ENCODE measurements at regions of chr18 and their contacts with region 1.

Region 1: GRCh38 chr18:48675352-48675761 is 136.5 kb downstream of the CTIF start:
- DNase-seq: peak; percentile 84 to 91
- ATAC-seq: peak; percentile 97 to 99 (median 99)
- H3K4me3 ChIP-seq: no peak overlapping the region
- H3K4me3 Mint-ChIP-seq: no peak overlapping the region
- H3K27ac ChIP-seq: no peak overlapping the region
- H3K27ac Mint-ChIP-seq: no peak overlapping the region
- H3K4me1 ChIP-seq: peaks cover 7% of the 10 kb centered on the region
- H3K4me1 Mint-ChIP-seq: no peaks in the 10 kb centered on the region
- H3K27me3 ChIP-seq: no peaks in the 10 kb centered on the region
- H3K27me3 Mint-ChIP-seq: no peaks in the 10 kb centered on the region
- CTCF ChIP-seq: peak; percentile 93

Region 2: DNA sequence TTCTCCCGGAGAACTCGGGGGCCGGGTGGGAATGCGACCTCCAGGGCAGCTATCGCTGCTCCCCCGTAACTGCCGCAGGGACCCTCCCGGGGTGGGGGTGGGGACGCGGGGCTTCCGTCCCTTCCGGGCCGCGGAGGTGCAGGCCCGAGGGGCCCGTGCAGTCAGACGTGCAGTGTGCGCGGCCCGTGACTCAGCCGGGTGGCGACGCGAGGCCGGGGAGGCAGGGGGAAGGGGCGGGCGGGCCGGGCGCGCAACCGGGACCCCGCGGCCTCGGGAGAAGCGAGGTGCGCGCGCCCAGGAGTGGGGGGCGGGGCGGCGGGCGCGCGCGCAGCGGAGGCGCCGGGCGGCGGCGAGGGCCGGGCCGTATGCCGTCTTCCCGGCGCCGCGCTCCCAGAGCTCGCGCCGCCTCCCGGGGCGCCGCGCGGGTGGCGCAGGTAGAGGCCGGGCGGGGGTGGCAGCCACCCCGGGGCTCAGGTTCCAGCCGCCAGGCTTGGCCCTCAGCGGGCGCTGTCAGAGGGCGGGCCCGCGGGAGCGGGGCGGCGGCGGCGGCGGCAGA is 300.4 kb after region 1 on chr18:
- intact Hi-C with region 1: loop called (anchors 10 kb)
- DNase-seq: peak; percentile 51 to 75
- ATAC-seq: peak; percentile 79 to 81 (median 80)
- H3K4me3 ChIP-seq: peak overlapping the region; percentile 34
- H3K4me3 Mint-ChIP-seq: peak overlapping the region; percentile 70
- H3K27ac ChIP-seq: no peak overlapping the region
- H3K27ac Mint-ChIP-seq: no peak overlapping the region
- H3K4me1 ChIP-seq: peaks cover 16% of the 10 kb centered on the region
- H3K4me1 Mint-ChIP-seq: peaks cover 0 to 26% of the 10 kb centered on the region in 2 donors
- H3K27me3 ChIP-seq: peaks cover 5% of the 10 kb centered on the region
- H3K27me3 Mint-ChIP-seq: peaks cover 0 to 29% of the 10 kb centered on the region in 2 donors
- CTCF ChIP-seq: no peak

Region 3: GRCh38 chr18:49178736-49179135 is 503.4 kb after region 1 on chr18:
- intact Hi-C with region 1: loop called (anchors 5 kb)
- DNase-seq: peak in 1 of 2 donors; percentile 36
- ATAC-seq: no peak
- H3K4me3 ChIP-seq: no peak overlapping the region
- H3K4me3 Mint-ChIP-seq: no peak overlapping the region
- H3K27ac ChIP-seq: no peak overlapping the region
- H3K27ac Mint-ChIP-seq: no peak overlapping the region
- H3K4me1 ChIP-seq: no peaks in the 10 kb centered on the region
- H3K4me1 Mint-ChIP-seq: peaks cover 9 to 13% of the 10 kb centered on the region in 2 donors
- H3K27me3 ChIP-seq: no peaks in the 10 kb centered on the region
- H3K27me3 Mint-ChIP-seq: no peaks in the 10 kb centered on the region
- CTCF ChIP-seq: peak; percentile 31

Region 4: DNA sequence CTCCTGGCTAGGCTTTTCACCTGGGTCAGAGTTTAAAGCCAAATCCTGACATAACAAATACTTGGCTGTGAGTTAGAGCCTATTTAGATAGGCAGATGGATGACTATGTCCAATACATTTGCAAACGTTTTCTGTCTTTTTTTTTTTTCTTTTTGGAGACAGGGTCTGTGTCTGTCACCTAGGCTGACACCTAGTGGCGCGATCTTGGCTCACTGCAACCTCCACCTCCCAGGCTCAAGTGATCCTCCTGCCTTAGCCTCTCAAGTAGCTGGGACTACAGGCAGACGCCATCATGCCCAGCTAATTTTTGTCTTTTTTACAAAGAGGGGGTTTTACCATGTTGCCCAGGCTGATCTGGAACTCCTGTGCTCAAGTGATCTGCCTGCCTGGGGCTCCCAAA is 660.3 kb after region 1 on chr18:
- intact Hi-C with region 1: loop called (anchors 5 kb)
- DNase-seq: peak in 1 of 2 donors; percentile 31
- ATAC-seq: peak in 1 of 3 donors; percentile 43
- H3K4me3 ChIP-seq: no peak overlapping the region
- H3K4me3 Mint-ChIP-seq: no peak overlapping the region
- H3K27ac ChIP-seq: no peak overlapping the region
- H3K27ac Mint-ChIP-seq: no peak overlapping the region
- H3K4me1 ChIP-seq: no peaks in the 10 kb centered on the region
- H3K4me1 Mint-ChIP-seq: peaks cover 5 to 15% of the 10 kb centered on the region in 2 donors
- H3K27me3 ChIP-seq: no peaks in the 10 kb centered on the region
- H3K27me3 Mint-ChIP-seq: no peaks in the 10 kb centered on the region
- CTCF ChIP-seq: no peak

Region 5: GRCh38 chr18:49447810-49448745 is 772.7 kb after region 1 on chr18:
- intact Hi-C with region 1: loop called (anchors 5 kb)
- DNase-seq: peak in 1 of 2 donors; percentile 82
- ATAC-seq: peak in 2 of 3 donors; percentile 46 to 61
- H3K4me3 ChIP-seq: no peak overlapping the region
- H3K4me3 Mint-ChIP-seq: no peak overlapping the region
- H3K27ac ChIP-seq: no peak overlapping the region
- H3K27ac Mint-ChIP-seq: no peak overlapping the region
- H3K4me1 ChIP-seq: no peaks in the 10 kb centered on the region
- H3K4me1 Mint-ChIP-seq: peaks cover 26 to 37% of the 10 kb centered on the region in 2 donors
- H3K27me3 ChIP-seq: no peaks in the 10 kb centered on the region
- H3K27me3 Mint-ChIP-seq: no peaks in the 10 kb centered on the region
- CTCF ChIP-seq: peak; percentile 28

Region 6: DNA sequence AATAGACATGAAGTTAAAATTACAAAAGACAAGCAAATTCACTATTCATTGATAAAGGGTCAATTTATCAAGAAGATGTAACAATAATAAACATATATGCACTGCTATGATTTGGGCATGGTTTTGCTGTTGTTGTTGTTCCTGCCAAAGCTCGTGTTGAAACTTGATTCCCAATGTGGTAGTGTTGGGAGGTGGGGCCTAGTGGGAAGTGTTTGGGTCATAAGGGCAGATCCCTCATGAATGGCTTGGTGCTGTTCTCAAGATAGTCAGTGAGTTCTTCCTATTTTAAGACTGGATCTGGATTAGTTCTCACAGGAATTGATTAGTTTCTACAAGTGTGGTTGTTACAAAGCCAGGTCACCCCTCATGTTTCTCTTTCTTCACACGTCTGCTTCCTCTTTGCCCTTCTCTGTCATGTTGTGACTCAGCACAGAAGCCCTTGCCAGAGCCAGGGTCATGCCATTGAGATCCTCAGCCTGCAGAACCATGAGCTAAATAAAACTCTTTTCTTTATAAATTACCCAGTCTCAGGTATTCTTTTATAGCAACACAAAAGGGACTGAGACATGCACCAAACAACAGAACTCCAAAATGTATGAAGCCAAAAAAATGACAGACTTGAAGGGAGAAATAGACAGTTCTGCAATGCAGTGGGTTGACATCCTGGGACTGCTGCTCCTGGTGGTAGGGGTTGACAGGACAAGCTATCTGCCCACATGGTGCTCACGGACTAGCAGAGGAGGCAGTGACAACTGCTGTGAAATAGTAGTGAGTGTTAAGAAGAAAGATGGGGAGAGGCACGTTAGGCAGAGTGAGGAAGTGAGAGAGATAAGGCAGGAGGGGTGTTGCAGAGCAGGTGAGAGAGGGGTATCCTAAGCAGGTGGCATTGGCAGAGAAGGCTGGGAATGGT is 1680.9 kb after region 1 on chr18:
- intact Hi-C with region 1: loop called (anchors 5 kb)
- DNase-seq: peak in 1 of 2 donors; percentile 31
- ATAC-seq: peak in 2 of 3 donors; percentile 25 to 54
- H3K4me3 ChIP-seq: no peak overlapping the region
- H3K4me3 Mint-ChIP-seq: no peak overlapping the region
- H3K27ac ChIP-seq: no peak overlapping the region
- H3K27ac Mint-ChIP-seq: peak overlapping the region in 1 of 2 donors; percentile 14
- H3K4me1 ChIP-seq: peaks cover 6% of the 10 kb centered on the region
- H3K4me1 Mint-ChIP-seq: peaks cover 5 to 7% of the 10 kb centered on the region in 2 donors
- H3K27me3 ChIP-seq: peaks cover 2% of the 10 kb centered on the region
- H3K27me3 Mint-ChIP-seq: peaks cover 12 to 36% of the 10 kb centered on the region in 2 donors
- CTCF ChIP-seq: no peak

Measured in natural killer cell (primary cell).